Gastrocnemius medialis (tissue), 4 donors: ENCODE measurements at regions of chr4 and their contacts with region 1.

Region 1: DNA sequence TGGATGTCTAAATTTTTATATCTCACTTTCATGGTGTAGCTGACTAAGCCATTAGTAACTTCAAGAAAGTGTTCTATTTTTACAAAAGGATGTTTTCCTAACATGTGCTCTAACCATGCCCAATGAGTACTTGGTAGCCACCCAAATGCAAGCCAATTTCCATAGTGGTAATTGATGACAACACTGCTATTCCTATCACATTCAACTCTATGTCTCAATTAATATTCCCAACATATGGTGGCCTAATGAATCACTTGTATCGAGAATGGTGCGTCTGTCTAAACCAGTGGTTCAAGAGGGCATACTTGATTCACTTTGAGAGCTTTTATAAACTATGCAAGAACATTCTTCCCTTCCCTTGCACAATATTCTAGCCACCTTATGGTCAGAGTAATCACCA is 112.9 kb upstream of the GPRIN3 start:
- DNase-seq: no peak
- ATAC-seq: no peak
- H3K4me3 ChIP-seq: no peak overlapping the region
- H3K27ac ChIP-seq: no peak overlapping the region
- H3K4me1 ChIP-seq: no peaks in the 10 kb centered on the region
- H3K27me3 ChIP-seq: no peaks in the 10 kb centered on the region
- CTCF ChIP-seq: no peak
- POLR2A ChIP-seq: no peak

Region 2: GRCh38 chr4:88196013-88196365 is 1224.5 kb before region 1 on chr4:
- in situ Hi-C with region 1: no loop called
- intact Hi-C with region 1: no loop called
- DNase-seq: no peak
- ATAC-seq: no peak
- H3K4me3 ChIP-seq: no peak overlapping the region
- H3K27ac ChIP-seq: no peak overlapping the region
- H3K4me1 ChIP-seq: no peaks in the 10 kb centered on the region
- H3K27me3 ChIP-seq: no peaks in the 10 kb centered on the region
- CTCF ChIP-seq: no peak
- POLR2A ChIP-seq: no peak

Region 3: GRCh38 chr4:89242864-89243732 is 177.4 kb before region 1 on chr4:
- in situ Hi-C with region 1: loop called in 1 of 4 experiments (anchors 10 kb)
- intact Hi-C with region 1: loop called (anchors 2 kb)
- DNase-seq: no peak
- ATAC-seq: no peak
- H3K4me3 ChIP-seq: no peak overlapping the region
- H3K27ac ChIP-seq: no peak overlapping the region
- H3K4me1 ChIP-seq: no peaks in the 10 kb centered on the region
- H3K27me3 ChIP-seq: no peaks in the 10 kb centered on the region
- CTCF ChIP-seq: no peak
- POLR2A ChIP-seq: no peak

Region 4: DNA sequence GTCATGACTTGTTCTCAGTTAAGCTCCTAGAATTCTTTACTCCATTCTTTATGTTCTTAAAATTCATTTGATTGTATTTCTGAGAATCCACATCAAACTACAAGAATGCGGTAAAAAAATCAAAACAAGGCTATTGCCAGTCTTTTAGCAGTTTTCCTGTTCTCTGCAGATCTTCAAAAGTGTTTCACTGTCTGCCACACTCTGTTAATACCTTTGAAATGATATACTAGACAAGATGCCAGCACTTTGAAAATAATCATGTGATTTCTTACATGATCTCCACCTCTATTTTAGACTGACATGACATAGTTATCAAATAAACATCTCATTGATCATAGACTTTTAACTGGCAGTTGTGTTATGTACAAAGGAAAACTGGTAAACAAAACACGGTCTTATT is 82.8 kb before region 1 on chr4:
- in situ Hi-C with region 1: no loop called
- intact Hi-C with region 1: no loop called
- DNase-seq: no peak
- ATAC-seq: no peak
- H3K4me3 ChIP-seq: no peak overlapping the region
- H3K27ac ChIP-seq: no peak overlapping the region
- H3K4me1 ChIP-seq: no peaks in the 10 kb centered on the region
- H3K27me3 ChIP-seq: no peaks in the 10 kb centered on the region
- CTCF ChIP-seq: no peak
- POLR2A ChIP-seq: no peak